Activated CD4-positive, alpha-beta T cell treated with anti-CD3 and anti-CD28 coated beads for 36 hours (primary cell): ENCODE measurements at regions of chr5 and their contacts with region 1.

Region 1: GRCh38 chr5:102778478-102778877 is 23.4 kb downstream of the PAM start:
- DNase-seq: no peak
- ATAC-seq: peak; percentile 84
- H3K4me3 Mint-ChIP-seq: peak overlapping the region; percentile 16
- H3K27ac Mint-ChIP-seq: peak overlapping the region; percentile 75
- H3K4me1 Mint-ChIP-seq: peaks cover 74% of the 10 kb centered on the region
- H3K27me3 Mint-ChIP-seq: no peaks in the 10 kb centered on the region

Region 2: DNA sequence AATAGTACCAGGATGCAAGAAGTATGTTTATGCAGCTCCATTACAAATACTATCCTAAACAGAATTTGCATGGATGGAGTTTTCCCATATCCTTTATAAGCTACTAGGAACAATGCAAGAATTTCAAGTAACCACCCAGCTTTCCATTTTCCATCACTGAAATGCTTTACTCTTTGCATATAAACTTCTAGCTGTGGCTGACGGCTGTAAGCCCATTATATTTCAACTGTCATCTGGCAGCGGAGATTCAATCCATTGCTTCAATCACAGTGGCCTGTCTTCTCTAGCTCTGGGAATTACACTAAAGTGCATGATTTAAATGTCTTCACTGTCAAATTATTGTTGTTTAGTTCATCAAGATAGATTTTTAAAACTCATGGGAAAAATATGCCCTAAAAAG is 87.6 kb before region 1 on chr5:
- CTCF ChIA-PET with region 1: no interaction called
- POLR2A ChIA-PET with region 1: no interaction called
- intact Hi-C with region 1: no loop called
- DNase-seq: no peak
- ATAC-seq: no peak
- H3K4me3 Mint-ChIP-seq: no peak overlapping the region
- H3K27ac Mint-ChIP-seq: no peak overlapping the region
- H3K4me1 Mint-ChIP-seq: no peaks in the 10 kb centered on the region
- H3K27me3 Mint-ChIP-seq: no peaks in the 10 kb centered on the region

Region 3: DNA sequence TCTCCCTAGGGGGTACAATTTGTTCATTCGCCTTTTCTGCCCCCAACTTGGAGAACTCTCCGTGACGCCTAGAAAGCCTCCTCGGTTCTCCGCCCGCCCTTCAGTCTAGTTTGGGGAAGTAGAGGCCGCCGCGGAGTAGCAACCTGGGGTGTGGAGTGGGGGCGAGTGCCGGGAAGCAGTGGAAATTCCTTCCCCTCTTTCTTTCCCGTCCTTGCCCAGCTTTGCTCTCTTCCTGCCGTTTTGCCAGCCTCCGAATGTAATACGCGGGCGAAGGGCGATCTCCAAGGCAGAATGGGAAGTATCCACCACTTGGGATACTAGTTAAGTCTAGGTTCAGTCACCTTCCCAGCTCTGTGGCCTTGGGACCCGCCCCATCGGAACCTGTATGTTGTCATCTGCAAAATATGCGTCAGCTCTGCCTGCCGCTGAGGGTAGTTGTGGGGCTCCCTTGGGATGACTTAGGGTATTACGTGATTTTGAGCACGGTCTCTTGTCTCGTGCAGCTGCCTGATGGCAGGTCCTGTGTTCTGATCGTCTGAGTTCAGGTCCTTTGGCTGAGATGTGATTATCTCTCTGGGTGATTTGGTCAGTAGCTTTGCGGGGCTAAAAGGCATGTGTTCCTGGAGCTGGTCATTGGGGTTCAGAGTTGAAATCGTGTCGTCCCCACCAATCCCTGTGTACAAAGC is 22.6 kb before region 1 on chr5:
- CTCF ChIA-PET with region 1: interaction called, 36 read pairs
- POLR2A ChIA-PET with region 1: interaction called, 12 read pairs
- intact Hi-C with region 1: loop called (anchors 1 kb)
- DNase-seq: peak; percentile 90
- ATAC-seq: peak; percentile 89
- H3K4me3 Mint-ChIP-seq: peak overlapping the region; percentile 84
- H3K27ac Mint-ChIP-seq: peak overlapping the region; percentile 98
- H3K4me1 Mint-ChIP-seq: peaks cover 52% of the 10 kb centered on the region
- H3K27me3 Mint-ChIP-seq: peaks cover 9% of the 10 kb centered on the region

Region 4: GRCh38 chr5:102767862-102768261 is 10.6 kb before region 1 on chr5:
- CTCF ChIA-PET with region 1: interaction called, 13 read pairs
- POLR2A ChIA-PET with region 1: interaction called, 5 read pairs
- intact Hi-C with region 1: loop called (anchors 1 kb)
- DNase-seq: peak; percentile 41
- ATAC-seq: peak; percentile 88
- H3K4me3 Mint-ChIP-seq: peak overlapping the region; percentile 7
- H3K27ac Mint-ChIP-seq: peak overlapping the region; percentile 72
- H3K4me1 Mint-ChIP-seq: peaks cover 56% of the 10 kb centered on the region
- H3K27me3 Mint-ChIP-seq: no peaks in the 10 kb centered on the region

Region 5: DNA sequence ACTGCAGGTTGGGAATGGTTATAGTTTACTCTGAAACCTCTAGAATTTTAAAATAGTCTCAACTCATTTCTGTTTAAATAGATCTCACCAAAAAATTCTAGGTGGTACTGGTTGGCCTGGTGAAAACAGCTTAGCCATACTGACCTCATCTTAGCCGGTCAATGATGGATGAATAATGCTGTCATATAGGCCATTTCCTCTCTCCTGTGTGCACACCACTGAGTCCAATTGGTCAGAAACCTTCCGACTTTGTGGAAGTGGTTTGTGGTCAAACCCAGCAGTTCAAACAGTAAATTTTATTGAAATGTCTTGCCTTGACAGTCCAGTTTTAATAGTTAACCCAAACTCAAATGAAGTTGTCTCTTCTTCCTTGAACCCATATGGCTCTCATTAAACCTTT is 242.8 kb after region 1 on chr5:
- CTCF ChIA-PET with region 1: no interaction called
- POLR2A ChIA-PET with region 1: no interaction called
- intact Hi-C with region 1: loop called in 1 of 2 experiments (anchors 10 kb)
- DNase-seq: no peak
- ATAC-seq: no peak
- H3K4me3 Mint-ChIP-seq: no peak overlapping the region
- H3K27ac Mint-ChIP-seq: no peak overlapping the region
- H3K4me1 Mint-ChIP-seq: no peaks in the 10 kb centered on the region
- H3K27me3 Mint-ChIP-seq: no peaks in the 10 kb centered on the region

Region 6: DNA sequence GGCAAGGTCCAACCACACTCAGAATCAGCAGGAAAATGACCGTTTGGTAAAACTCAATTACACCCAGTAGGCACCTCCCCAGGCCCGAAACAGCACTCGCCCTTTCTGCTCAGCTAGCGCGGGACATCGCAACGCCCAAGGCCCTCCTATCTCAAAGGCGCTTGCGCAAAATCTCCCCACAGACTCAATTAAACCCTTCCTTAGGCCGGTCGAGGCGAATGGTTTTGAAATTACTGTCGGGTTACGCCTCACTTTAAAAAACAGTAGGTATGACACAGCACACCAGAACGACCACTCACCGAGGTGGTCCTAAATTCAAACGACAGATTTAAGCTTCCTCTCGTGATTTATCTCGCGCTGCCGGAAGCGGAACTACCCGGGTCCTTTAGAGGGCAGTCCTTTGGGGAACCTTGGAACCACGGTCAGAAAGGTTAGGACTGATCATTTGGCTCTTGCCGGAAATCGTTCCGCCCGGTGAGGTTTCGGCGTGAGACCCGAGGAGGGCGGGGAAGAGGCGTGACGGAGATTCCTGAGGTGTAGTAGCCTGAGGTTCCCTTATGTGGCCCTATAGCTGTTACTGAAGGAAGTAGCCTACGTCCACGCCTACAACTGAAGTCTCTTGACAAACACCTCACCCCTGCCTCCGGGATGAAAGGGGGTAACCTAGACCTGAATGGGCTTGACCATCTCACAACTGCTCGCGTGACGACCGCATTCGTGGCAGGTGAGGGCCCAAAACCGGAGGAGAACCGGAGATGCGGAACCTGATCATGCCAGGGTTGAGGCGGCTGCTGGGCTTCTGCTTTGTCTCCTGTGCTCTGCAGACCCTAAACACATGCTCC is 341.5 kb after region 1 on chr5 and contains the starts of genes GIN1 and PPIP5K2:
- CTCF ChIA-PET with region 1: no interaction called
- POLR2A ChIA-PET with region 1: interaction called, 3 read pairs
- intact Hi-C with region 1: loop called (anchors 5 kb)
- DNase-seq: peak; percentile 97
- ATAC-seq: peak; percentile 91
- H3K4me3 Mint-ChIP-seq: peak within 1 kb of the TSS; percentile 76
- H3K27ac Mint-ChIP-seq: peak within 1 kb of the TSS; percentile 95
- H3K4me1 Mint-ChIP-seq: peaks cover 39% of the 10 kb centered on the region
- H3K27me3 Mint-ChIP-seq: no peaks in the 10 kb centered on the region
- total RNA-seq, gene GIN1: 9.0 to 9.7 TPM
- total RNA-seq, gene PPIP5K2: 49.5 to 53.4 TPM